ENCODE measurements at regions of chr11 and their contacts with region 1.

Region 1: DNA sequence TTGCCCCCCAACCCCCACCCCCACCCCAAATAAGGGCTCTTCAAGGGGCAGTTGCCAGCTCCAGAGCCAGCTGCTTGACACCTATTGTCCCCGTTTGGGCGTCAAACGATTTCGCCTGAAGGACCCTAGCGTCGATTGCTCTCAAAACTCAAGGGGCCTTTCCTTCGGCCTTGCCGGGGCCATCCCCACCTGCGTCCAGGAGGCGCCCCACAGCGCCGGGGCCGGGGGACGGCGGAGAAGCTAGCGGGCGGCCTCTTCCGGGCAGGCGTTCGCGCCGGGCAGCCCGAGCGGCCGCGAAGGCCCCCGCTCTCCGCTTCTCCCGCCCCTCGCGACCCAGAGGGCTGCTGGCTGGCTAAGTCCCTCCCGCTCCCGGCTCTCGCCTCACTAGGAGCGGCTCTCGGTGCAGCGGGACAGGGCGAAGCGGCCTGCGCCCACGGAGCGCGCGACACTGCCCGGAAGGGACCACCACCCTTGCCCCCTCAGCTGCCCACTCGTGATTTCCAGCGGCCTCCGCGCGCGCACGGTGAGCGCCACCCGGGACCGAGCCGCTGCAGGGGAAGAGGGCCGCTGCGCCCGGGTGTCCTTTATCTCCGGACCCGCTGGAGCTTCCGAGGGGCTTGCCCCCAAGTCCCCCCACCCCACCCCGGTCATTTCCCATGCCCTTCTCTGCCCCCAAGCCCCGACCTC is at the start of gene CAPRIN1:
- DNase-seq: peak; percentile 88 to 94 (median 91)
- H3K4me3 ChIP-seq: peak within 1 kb of the TSS; percentile 84 to 97
- H3K4me3 Mint-ChIP-seq: peak within 1 kb of the TSS; percentile 95 to 99 (median 97)
- H3K27ac ChIP-seq: peak within 1 kb of the TSS; percentile 97
- H3K27ac Mint-ChIP-seq: peak within 1 kb of the TSS; percentile 95 to 99 (median 97)
- H3K4me1 ChIP-seq: peaks cover 34% of the 10 kb centered on the region
- H3K4me1 Mint-ChIP-seq: peaks cover 14 to 40% (median 23%) of the 10 kb centered on the region in 4 donors
- H3K27me3 ChIP-seq: no peaks in the 10 kb centered on the region
- H3K27me3 Mint-ChIP-seq: no peaks in the 10 kb centered on the region
- total RNA-seq, gene CAPRIN1: 160 to 176 TPM

Region 2: GRCh38 chr11:33700425-33701271 is 350.8 kb before region 1 on chr11 and contains the start of gene C11orf91:
- CTCF ChIA-PET with region 1: no interaction called
- POLR2A ChIA-PET with region 1: no interaction called
- intact Hi-C with region 1: loop called (anchors 10 kb)
- DNase-seq: peak; percentile 89 to 95 (median 94)
- H3K4me3 ChIP-seq: peak within 1 kb of the TSS; percentile 7 to 53
- H3K4me3 Mint-ChIP-seq: peak within 1 kb of the TSS; percentile 89 to 96 (median 92)
- H3K27ac ChIP-seq: peak within 1 kb of the TSS; percentile 29
- H3K27ac Mint-ChIP-seq: peak within 1 kb of the TSS; percentile 78 to 93 (median 88)
- H3K4me1 ChIP-seq: peaks cover 15% of the 10 kb centered on the region
- H3K4me1 Mint-ChIP-seq: peaks cover 11 to 22% (median 19%) of the 10 kb centered on the region in 4 donors
- H3K27me3 ChIP-seq: no peaks in the 10 kb centered on the region
- H3K27me3 Mint-ChIP-seq: peaks cover 5 to 13% of the 10 kb centered on the region in 2 donors
- total RNA-seq, gene C11orf91: 0.49 TPM in 1 of 2 experiments, not detected in the other

Region 3: GRCh38 chr11:33996498-33997454 is 54.7 kb before region 1 on chr11:
- CTCF ChIA-PET with region 1: no interaction called
- POLR2A ChIA-PET with region 1: interaction called, 7 read pairs
- intact Hi-C with region 1: loop called (anchors 1 kb)
- DNase-seq: peak; percentile 71 to 77 (median 72)
- H3K4me3 ChIP-seq: no peak overlapping the region
- H3K4me3 Mint-ChIP-seq: peak overlapping the region in 6 of 8 donors; percentile 4 to 73 (median 62)
- H3K27ac ChIP-seq: no peak overlapping the region
- H3K27ac Mint-ChIP-seq: no peak overlapping the region
- H3K4me1 ChIP-seq: peaks cover 8% of the 10 kb centered on the region
- H3K4me1 Mint-ChIP-seq: peaks cover 6 to 11% (median 7%) of the 10 kb centered on the region in 4 donors
- H3K27me3 ChIP-seq: no peaks in the 10 kb centered on the region
- H3K27me3 Mint-ChIP-seq: peaks cover 14 to 23% of the 10 kb centered on the region in 2 donors

Region 4: DNA sequence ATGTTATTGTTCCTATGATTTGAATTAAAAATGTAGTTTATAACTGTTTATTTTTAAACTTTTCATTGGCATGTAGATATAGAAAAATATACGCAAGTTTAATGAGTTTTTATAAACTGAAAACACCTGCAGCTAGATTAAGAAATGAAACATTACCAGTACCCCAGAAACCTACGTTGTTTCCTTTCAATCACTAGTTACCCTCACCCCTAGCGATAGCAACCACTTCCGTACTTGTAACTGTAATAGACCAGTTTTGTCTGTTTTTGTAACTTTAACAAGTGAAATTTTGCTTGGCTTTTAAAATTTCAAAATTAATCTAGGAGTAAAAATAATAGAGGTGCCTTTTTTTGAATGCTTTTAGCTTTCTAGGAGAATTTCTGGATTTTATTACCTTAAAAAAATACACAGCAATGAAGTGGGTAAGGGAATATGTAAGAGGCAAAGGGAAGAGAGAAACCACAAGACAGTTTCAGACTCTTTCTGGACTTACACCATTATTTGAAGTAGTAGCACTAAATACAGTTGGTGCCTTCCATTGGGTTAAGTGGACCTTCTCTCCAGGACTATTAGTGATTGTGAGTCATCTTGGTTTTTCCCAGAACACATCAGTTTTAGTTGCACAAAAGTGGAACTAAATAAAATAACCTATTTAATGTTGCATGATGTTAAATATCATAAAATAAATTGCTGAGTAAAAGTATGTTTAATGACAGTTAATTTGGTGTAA is 35.2 kb after region 1 on chr11:
- CTCF ChIA-PET with region 1: no interaction called
- POLR2A ChIA-PET with region 1: interaction called, 13 read pairs
- intact Hi-C with region 1: loop called (anchors 5 kb)
- DNase-seq: peak in 4 of 5 donors; percentile 22 to 43 (median 30)
- H3K4me3 ChIP-seq: no peak overlapping the region
- H3K4me3 Mint-ChIP-seq: peak overlapping the region in 6 of 8 donors; percentile 25 to 67 (median 39)
- H3K27ac ChIP-seq: peak overlapping the region; percentile 35
- H3K27ac Mint-ChIP-seq: peak overlapping the region; percentile 49 to 93 (median 86)
- H3K4me1 ChIP-seq: peaks cover 15% of the 10 kb centered on the region
- H3K4me1 Mint-ChIP-seq: peaks cover 11 to 33% (median 23%) of the 10 kb centered on the region in 4 donors
- H3K27me3 ChIP-seq: no peaks in the 10 kb centered on the region
- H3K27me3 Mint-ChIP-seq: no peaks in the 10 kb centered on the region

Region 5: DNA sequence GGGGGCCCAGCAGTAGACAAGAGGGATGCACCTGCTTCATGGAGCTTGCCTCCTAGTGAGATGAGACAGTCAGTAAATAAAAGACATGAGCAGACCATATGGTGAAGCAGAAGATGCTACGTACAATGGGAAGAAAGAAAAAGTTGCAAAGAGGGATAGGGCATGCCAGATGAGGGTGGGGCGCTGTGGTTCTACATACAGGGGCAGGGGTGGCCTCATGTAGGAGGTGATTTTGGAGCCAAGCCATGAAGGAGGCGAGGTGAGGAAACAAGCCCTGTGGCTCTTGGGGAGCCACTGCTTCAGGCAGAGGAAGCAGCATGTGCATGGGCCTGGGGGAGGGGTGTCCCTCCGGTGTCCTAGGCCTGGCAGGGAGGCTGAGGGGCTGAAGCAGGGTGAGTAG is 69.2 kb after region 1 on chr11:
- CTCF ChIA-PET with region 1: no interaction called
- POLR2A ChIA-PET with region 1: no interaction called
- intact Hi-C with region 1: no loop called
- DNase-seq: no peak
- H3K4me3 ChIP-seq: no peak overlapping the region
- H3K4me3 Mint-ChIP-seq: no peak overlapping the region
- H3K27ac ChIP-seq: no peak overlapping the region
- H3K27ac Mint-ChIP-seq: peak overlapping the region in 5 of 7 donors; percentile 26 to 75 (median 62)
- H3K4me1 ChIP-seq: no peaks in the 10 kb centered on the region
- H3K4me1 Mint-ChIP-seq: peaks cover 0 to 4% (median 3%) of the 10 kb centered on the region in 4 donors
- H3K27me3 ChIP-seq: no peaks in the 10 kb centered on the region
- H3K27me3 Mint-ChIP-seq: no peaks in the 10 kb centered on the region

Region 6: GRCh38 chr11:34438529-34439507 is 387.3 kb after region 1 on chr11 and contains the start of gene CAT:
- CTCF ChIA-PET with region 1: no interaction called
- POLR2A ChIA-PET with region 1: interaction called, 5 read pairs
- intact Hi-C with region 1: loop called (anchors 1 kb)
- DNase-seq: peak; percentile 96 to 97 (median 96)
- H3K4me3 ChIP-seq: peak within 1 kb of the TSS; percentile 52 to 90
- H3K4me3 Mint-ChIP-seq: peak within 1 kb of the TSS; percentile 94 to 99 (median 98)
- H3K27ac ChIP-seq: peak within 1 kb of the TSS; percentile 75
- H3K27ac Mint-ChIP-seq: peak within 1 kb of the TSS; percentile 93 to 98 (median 95)
- H3K4me1 ChIP-seq: peaks cover 28% of the 10 kb centered on the region
- H3K4me1 Mint-ChIP-seq: peaks cover 22 to 41% (median 31%) of the 10 kb centered on the region in 4 donors
- H3K27me3 ChIP-seq: no peaks in the 10 kb centered on the region
- H3K27me3 Mint-ChIP-seq: no peaks in the 10 kb centered on the region
- total RNA-seq, gene CAT: 35.1 to 38.4 TPM